Activated B cell treated with CpG ODN at 0.5 μM for 24 hours (primary cell): ENCODE measurements at regions of chr2 and their contacts with region 1.

Region 1: DNA sequence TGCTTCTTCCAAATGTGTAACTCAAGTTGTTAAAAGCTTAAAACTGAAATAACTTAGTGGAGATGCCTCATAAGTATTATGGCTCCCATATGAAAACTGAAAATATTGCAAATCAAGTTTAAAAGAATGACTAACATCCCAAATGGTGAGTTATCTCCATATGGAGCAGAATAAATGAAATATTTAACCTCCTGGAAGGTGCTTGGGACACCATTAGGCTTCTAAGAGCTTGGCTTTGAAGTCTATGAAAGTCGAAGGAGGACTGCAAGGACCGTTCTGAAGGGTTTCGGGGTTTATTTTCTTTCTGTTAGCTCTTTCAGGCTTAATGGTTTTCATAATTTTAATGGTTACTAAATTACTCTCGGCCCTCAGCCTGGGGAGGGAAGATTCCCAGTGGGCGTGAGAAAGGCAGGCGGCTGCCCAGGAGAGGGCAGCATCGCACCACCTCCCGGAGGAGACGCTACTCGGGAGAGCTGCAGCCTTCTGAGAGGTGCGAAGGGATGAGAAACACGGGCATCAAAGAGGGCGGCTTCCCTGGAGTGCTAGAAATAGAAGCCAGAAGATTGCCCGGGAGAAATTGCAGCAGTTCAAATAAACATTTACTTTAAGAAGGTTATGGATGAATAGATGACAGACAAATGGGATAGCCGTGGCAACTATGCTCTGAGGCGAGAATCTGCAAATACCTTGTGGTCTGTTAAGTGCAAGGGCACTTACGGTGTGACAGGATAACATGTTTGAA is 43.1 kb downstream of the MAP3K19 start:
- DNase-seq: peak; percentile 57
- ATAC-seq: peak; percentile 68
- H3K4me3 Mint-ChIP-seq: no peak overlapping the region
- H3K27ac Mint-ChIP-seq: no peak overlapping the region
- H3K4me1 Mint-ChIP-seq: peaks cover 4% of the 10 kb centered on the region
- H3K27me3 Mint-ChIP-seq: peaks cover 20% of the 10 kb centered on the region
- CTCF ChIP-seq: peak; percentile 33

Region 2: GRCh38 chr2:134952608-134953007 is 51.6 kb before region 1 on chr2:
- CTCF ChIA-PET with region 1: no interaction called
- POLR2A ChIA-PET with region 1: no interaction called
- intact Hi-C with region 1: no loop called
- DNase-seq: no peak
- ATAC-seq: no peak
- H3K4me3 Mint-ChIP-seq: no peak overlapping the region
- H3K27ac Mint-ChIP-seq: no peak overlapping the region
- H3K4me1 Mint-ChIP-seq: peaks cover 18% of the 10 kb centered on the region
- H3K27me3 Mint-ChIP-seq: no peaks in the 10 kb centered on the region
- CTCF ChIP-seq: no peak

Region 3: GRCh38 chr2:134988994-134989605 is 15.1 kb before region 1 on chr2:
- CTCF ChIA-PET with region 1: interaction called, 11 read pairs
- POLR2A ChIA-PET with region 1: no interaction called
- intact Hi-C with region 1: no loop called
- DNase-seq: no peak
- ATAC-seq: no peak
- H3K4me3 Mint-ChIP-seq: no peak overlapping the region
- H3K27ac Mint-ChIP-seq: no peak overlapping the region
- H3K4me1 Mint-ChIP-seq: peaks cover 4% of the 10 kb centered on the region
- H3K27me3 Mint-ChIP-seq: peaks cover 7% of the 10 kb centered on the region
- CTCF ChIP-seq: no peak

Region 4: DNA sequence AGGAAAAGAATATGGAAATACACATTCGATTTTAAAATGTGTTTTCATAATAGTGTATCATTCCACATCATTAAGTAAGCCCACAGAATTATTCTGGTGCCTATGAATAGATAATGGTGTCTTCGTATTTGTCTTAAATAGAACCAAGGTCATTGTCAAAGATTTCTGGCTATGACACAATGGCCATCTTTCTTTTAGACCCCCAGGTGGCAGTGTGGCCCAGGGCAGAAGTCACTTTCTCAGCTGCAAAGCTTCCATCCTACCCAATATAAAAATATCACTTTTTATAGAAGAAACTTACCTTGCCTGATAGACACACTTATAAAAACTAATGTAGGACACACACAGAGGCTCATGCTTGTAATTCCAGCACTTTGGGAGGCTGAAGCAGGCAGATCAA is 469.4 kb after region 1 on chr2:
- CTCF ChIA-PET with region 1: no interaction called
- POLR2A ChIA-PET with region 1: no interaction called
- intact Hi-C with region 1: loop called (anchors 2 kb)
- DNase-seq: no peak
- ATAC-seq: no peak
- H3K4me3 Mint-ChIP-seq: no peak overlapping the region
- H3K27ac Mint-ChIP-seq: no peak overlapping the region
- H3K4me1 Mint-ChIP-seq: no peaks in the 10 kb centered on the region
- H3K27me3 Mint-ChIP-seq: no peaks in the 10 kb centered on the region
- CTCF ChIP-seq: no peak

Region 5: GRCh38 chr2:135600915-135601314 is 596.7 kb after region 1 on chr2:
- CTCF ChIA-PET with region 1: interaction called, 12 read pairs
- POLR2A ChIA-PET with region 1: no interaction called
- intact Hi-C with region 1: loop called (anchors 1 kb)
- DNase-seq: no peak
- ATAC-seq: no peak
- H3K4me3 Mint-ChIP-seq: no peak overlapping the region
- H3K27ac Mint-ChIP-seq: no peak overlapping the region
- H3K4me1 Mint-ChIP-seq: no peaks in the 10 kb centered on the region
- H3K27me3 Mint-ChIP-seq: no peaks in the 10 kb centered on the region
- CTCF ChIP-seq: no peak

Region 6: GRCh38 chr2:135709992-135710391 is 705.8 kb after region 1 on chr2:
- CTCF ChIA-PET with region 1: interaction called, 118 read pairs
- POLR2A ChIA-PET with region 1: no interaction called
- intact Hi-C with region 1: loop called (anchors 1 kb)
- DNase-seq: peak; percentile 54
- ATAC-seq: peak; percentile 79
- H3K4me3 Mint-ChIP-seq: no peak overlapping the region
- H3K27ac Mint-ChIP-seq: no peak overlapping the region
- H3K4me1 Mint-ChIP-seq: no peaks in the 10 kb centered on the region
- H3K27me3 Mint-ChIP-seq: no peaks in the 10 kb centered on the region
- CTCF ChIP-seq: no peak

Region 7: GRCh38 chr2:135797497-135798274 is 793.5 kb after region 1 on chr2:
- CTCF ChIA-PET with region 1: interaction called, 14 read pairs
- POLR2A ChIA-PET with region 1: no interaction called
- intact Hi-C with region 1: loop called (anchors 1 kb)
- DNase-seq: peak; percentile 59
- ATAC-seq: peak; percentile 81
- H3K4me3 Mint-ChIP-seq: no peak overlapping the region
- H3K27ac Mint-ChIP-seq: no peak overlapping the region
- H3K4me1 Mint-ChIP-seq: peaks cover 15% of the 10 kb centered on the region
- H3K27me3 Mint-ChIP-seq: no peaks in the 10 kb centered on the region
- CTCF ChIP-seq: peak; percentile 62